ENCODE measurements at regions of chr1 and their contacts with region 1.

Region 1: DNA sequence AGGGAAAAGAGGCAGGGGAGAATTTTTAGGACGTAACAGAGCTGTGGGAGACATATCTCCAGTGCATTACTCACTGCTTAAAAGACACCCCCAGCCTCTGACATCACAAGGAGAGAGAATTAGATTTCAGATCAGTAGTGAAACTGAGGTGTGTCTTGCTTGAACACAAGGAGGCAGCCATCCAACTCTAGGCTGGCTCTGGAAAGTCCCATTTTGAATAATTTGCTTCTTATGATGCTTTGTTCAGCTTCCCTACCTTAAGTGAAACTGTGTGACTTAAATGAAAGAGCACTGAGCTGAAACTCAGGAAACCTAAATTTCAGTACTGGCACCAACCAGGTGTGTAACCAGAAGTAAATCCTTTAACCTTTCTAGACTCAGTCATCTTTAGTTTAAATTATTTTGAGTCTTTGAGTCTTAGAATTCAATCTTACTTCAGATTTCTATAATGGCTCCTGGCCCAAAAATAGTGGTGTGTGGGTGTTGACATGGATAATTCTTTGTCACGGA is 251.6 kb upstream of the SGIP1 start:
- DNase-seq: peak; percentile 82
- ATAC-seq: peak; percentile 80
- H3K4me3 Mint-ChIP-seq: peak overlapping the region; percentile 29
- H3K27ac Mint-ChIP-seq: peak overlapping the region; percentile 90
- H3K4me1 Mint-ChIP-seq: peaks cover 93% of the 10 kb centered on the region
- H3K27me3 Mint-ChIP-seq: no peaks in the 10 kb centered on the region

Region 2: GRCh38 chr1:66271216-66271903 is 11.0 kb before region 1 on chr1:
- CTCF ChIA-PET with region 1: interaction called, 8 read pairs
- POLR2A ChIA-PET with region 1: interaction called, 3 read pairs
- intact Hi-C with region 1: loop called (anchors 1 kb)
- DNase-seq: peak; percentile 78
- ATAC-seq: peak; percentile 65
- H3K4me3 Mint-ChIP-seq: peak overlapping the region; percentile 47
- H3K27ac Mint-ChIP-seq: peak overlapping the region; percentile 90
- H3K4me1 Mint-ChIP-seq: peaks cover 76% of the 10 kb centered on the region
- H3K27me3 Mint-ChIP-seq: no peaks in the 10 kb centered on the region

Region 3: DNA sequence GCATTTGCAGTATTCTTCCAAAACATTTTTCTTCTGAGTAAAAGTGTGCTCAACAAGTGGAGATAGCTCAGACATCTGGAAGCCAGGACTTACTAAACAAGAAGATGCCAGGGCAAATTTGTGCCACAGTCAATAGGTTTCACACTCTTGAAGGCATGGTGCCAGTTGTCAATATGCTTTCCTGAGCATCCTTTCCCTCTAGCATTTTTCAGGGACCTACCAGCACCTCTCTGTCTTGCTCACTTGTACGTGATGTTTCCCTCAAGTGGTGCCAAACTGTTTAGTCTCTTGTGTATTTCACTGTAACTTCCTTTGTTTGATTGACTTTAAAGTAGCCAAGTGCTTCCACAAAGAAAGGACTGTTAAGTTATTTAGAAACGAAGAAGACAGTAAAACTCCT is 57.5 kb after region 1 on chr1:
- CTCF ChIA-PET with region 1: interaction called, 30 read pairs
- POLR2A ChIA-PET with region 1: interaction called, 3 read pairs
- intact Hi-C with region 1: loop called in 1 of 2 experiments (anchors 1 kb)
- DNase-seq: no peak
- ATAC-seq: no peak
- H3K4me3 Mint-ChIP-seq: peak overlapping the region; percentile 69
- H3K27ac Mint-ChIP-seq: peak overlapping the region; percentile 85
- H3K4me1 Mint-ChIP-seq: peaks cover 68% of the 10 kb centered on the region
- H3K27me3 Mint-ChIP-seq: no peaks in the 10 kb centered on the region

Region 4: DNA sequence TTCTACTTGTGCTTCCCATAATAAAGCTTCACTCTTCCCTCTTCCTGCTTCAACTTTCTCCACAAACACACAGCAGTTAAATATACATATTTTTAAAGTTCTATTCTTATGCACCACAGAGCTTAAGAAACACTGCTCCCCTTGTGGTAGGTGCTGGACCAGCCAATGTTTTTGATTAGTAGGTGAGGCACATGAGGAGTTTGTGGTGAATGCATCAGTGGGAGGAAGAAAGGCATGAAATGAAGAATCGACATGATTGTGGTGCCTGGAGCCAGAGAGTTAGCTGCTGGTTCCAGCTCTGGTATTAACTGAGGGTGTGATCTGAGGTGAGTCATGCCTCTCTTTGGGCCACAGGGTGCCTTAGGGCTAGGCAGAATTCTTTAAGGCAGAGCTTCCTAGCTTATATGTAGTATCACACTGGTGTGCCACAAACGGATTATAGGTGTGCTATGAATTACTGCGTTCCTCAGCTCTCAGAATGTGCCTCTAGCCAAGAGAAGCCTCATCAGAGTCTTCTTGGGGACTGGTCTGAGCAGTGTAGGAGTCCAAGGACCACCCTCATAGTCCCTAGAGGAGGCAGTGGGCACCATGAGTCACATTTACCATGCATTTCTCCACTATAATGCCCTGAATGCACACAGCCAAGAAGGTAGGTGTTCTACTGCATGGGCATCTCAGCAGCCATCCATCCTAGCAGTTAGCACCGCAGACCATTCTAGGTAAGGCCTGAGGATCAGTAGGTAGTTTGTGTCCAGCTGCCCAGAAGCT is 154.2 kb after region 1 on chr1:
- CTCF ChIA-PET with region 1: interaction called, 11 read pairs
- POLR2A ChIA-PET with region 1: interaction called, 4 read pairs
- intact Hi-C with region 1: loop called in 1 of 2 experiments (anchors 1 kb)
- DNase-seq: peak; percentile 77
- ATAC-seq: peak; percentile 97
- H3K4me3 Mint-ChIP-seq: no peak overlapping the region
- H3K27ac Mint-ChIP-seq: peak overlapping the region; percentile 58
- H3K4me1 Mint-ChIP-seq: peaks cover 39% of the 10 kb centered on the region
- H3K27me3 Mint-ChIP-seq: no peaks in the 10 kb centered on the region

Region 5: DNA sequence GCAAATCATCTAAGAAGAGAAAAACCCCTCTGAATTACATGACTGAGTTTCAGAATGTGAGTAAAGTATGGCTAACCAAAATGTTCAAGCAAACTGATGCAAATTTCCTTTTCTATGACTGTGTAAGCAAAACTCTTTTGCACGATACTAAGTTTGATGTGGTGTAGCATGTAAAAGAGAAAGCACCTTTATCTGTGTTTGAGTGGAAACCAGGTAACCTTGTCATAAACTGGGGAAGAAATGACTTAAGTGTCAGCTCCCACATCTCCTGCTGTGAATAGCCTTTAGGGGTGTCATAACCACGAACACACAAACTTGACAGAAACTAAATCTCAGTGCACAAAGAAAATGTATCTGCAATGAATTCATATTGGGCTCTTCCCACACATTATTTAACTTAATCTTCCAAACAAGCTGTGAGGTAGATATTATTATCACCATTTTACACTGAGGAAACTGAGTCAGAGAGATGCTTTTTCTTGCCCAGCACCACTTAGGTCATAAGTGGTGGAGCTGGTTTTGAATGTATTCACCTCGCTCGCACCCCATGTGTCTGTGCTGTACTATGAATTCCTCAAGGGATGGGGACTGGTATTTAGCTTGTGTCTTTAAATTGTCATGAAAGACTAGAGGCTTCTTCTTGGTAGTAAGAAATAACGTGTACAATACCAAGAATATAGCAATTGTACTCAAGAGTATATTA is 992.4 kb after region 1 on chr1:
- CTCF ChIA-PET with region 1: no interaction called
- POLR2A ChIA-PET with region 1: no interaction called
- intact Hi-C with region 1: loop called in 1 of 2 experiments (anchors 10 kb)
- DNase-seq: peak; percentile 44
- ATAC-seq: peak; percentile 90
- H3K4me3 Mint-ChIP-seq: no peak overlapping the region
- H3K27ac Mint-ChIP-seq: peak overlapping the region; percentile 76
- H3K4me1 Mint-ChIP-seq: peaks cover 54% of the 10 kb centered on the region
- H3K27me3 Mint-ChIP-seq: peaks cover 3% of the 10 kb centered on the region